ENCODE measurements at regions of chr11 and their contacts with region 1.

Region 1: GRCh38 chr11:2532704-2533586 is 88.1 kb downstream of the KCNQ1 start:
- DNase-seq: peak; percentile 65 to 85
- H3K4me3 ChIP-seq: no peak overlapping the region; the same call in 1 of the 2 replicates
- H3K27ac ChIP-seq: peak overlapping the region; percentile 67; the same call in 1 of the 2 replicates
- H3K4me1 ChIP-seq: peaks cover 13% of the 10 kb centered on the region
- H3K27me3 ChIP-seq: peaks cover 14% of the 10 kb centered on the region
- CTCF ChIP-seq: peak; percentile 92

Region 2: GRCh38 chr11:2305140-2305840 is 227.7 kb before region 1 on chr11:
- CTCF ChIA-PET with region 1: interaction called, 3 read pairs
- POLR2A ChIA-PET with region 1: no interaction called
- intact Hi-C with region 1: loop called (anchors 1 kb)
- DNase-seq: peak in 1 of 2 experiments; percentile 64
- H3K4me3 ChIP-seq: no peak overlapping the region
- H3K27ac ChIP-seq: no peak overlapping the region
- H3K4me1 ChIP-seq: no peaks in the 10 kb centered on the region
- H3K27me3 ChIP-seq: no peaks in the 10 kb centered on the region
- CTCF ChIP-seq: peak; percentile 83

Region 3: DNA sequence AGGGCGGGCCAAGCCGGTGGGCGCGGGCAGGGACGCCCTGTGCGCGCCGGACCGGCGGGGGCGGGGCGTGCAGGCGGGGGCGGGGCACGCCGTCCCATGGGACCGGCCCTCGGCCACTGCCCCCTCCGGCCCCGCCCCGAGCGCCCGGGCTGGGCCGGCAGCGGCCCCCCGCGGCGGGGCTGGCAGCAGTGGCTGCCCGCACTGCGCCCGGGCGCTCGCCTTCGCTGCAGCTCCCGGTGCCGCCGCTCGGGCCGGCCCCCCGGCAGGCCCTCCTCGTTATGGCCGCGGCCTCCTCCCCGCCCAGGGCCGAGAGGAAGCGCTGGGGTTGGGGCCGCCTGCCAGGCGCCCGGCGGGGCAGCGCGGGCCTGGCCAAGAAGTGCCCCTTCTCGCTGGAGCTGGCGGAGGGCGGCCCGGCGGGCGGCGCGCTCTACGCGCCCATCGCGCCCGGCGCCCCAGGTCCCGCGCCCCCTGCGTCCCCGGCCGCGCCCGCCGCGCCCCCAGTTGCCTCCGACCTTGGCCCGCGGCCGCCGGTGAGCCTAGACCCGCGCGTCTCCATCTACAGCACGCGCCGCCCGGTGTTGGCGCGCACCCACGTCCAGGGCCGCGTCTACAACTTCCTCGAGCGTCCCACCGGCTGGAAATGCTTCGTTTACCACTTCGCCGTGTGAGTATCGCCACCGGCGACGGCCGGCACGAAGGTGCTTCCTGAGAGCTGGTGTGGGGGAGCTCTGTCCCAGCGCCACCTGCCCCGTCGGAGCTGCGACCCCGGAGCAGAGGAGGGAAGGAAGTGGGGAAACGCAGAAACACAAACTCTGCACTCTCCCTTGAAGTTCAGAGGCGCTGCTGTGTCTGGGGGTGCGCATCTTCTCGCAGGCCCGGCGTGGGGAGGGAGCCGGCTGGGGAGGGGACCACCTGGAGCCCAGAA is 87.9 kb before region 1 on chr11 and contains the start of gene KCNQ1:
- CTCF ChIA-PET with region 1: no interaction called
- POLR2A ChIA-PET with region 1: interaction called, 10 read pairs
- intact Hi-C with region 1: no loop called
- DNase-seq: peak in 1 of 2 experiments; percentile 32
- H3K4me3 ChIP-seq: no peak within 1 kb of the TSS
- H3K27ac ChIP-seq: no peak within 1 kb of the TSS
- H3K4me1 ChIP-seq: no peaks in the 10 kb centered on the region
- H3K27me3 ChIP-seq: peaks cover 37% of the 10 kb centered on the region
- CTCF ChIP-seq: no peak
- total RNA-seq, gene KCNQ1: 0.55 TPM in 1 of 2 replicates, not detected in the other

Region 4: GRCh38 chr11:2778630-2779498 is 245.9 kb after region 1 on chr11:
- CTCF ChIA-PET with region 1: no interaction called
- POLR2A ChIA-PET with region 1: no interaction called
- intact Hi-C with region 1: loop called (anchors 1 kb)
- DNase-seq: peak in 1 of 2 experiments; percentile 84
- H3K4me3 ChIP-seq: no peak overlapping the region
- H3K27ac ChIP-seq: no peak overlapping the region
- H3K4me1 ChIP-seq: peaks cover 16% of the 10 kb centered on the region
- H3K27me3 ChIP-seq: no peaks in the 10 kb centered on the region
- CTCF ChIP-seq: no peak

Region 5: GRCh38 chr11:2892215-2893020 is 359.5 kb after region 1 on chr11:
- CTCF ChIA-PET with region 1: interaction called, 9 read pairs
- POLR2A ChIA-PET with region 1: interaction called, 5 read pairs
- intact Hi-C with region 1: loop called (anchors 1 kb)
- DNase-seq: peak; percentile 50 to 57
- H3K4me3 ChIP-seq: peak overlapping the region; percentile 62; the same call in 1 of the 2 replicates
- H3K27ac ChIP-seq: peak overlapping the region; percentile 63
- H3K4me1 ChIP-seq: peaks cover 8% of the 10 kb centered on the region; the same call in 1 of the 2 replicates
- H3K27me3 ChIP-seq: no peaks in the 10 kb centered on the region
- CTCF ChIP-seq: peak; percentile 91

Region 6: GRCh38 chr11:3021125-3021524 is 488.2 kb after region 1 on chr11:
- CTCF ChIA-PET with region 1: interaction called, 3 read pairs
- POLR2A ChIA-PET with region 1: no interaction called
- intact Hi-C with region 1: loop called (anchors 5 kb)
- DNase-seq: peak; percentile 33 to 43
- H3K4me3 ChIP-seq: no peak overlapping the region
- H3K27ac ChIP-seq: no peak overlapping the region
- H3K4me1 ChIP-seq: no peaks in the 10 kb centered on the region; the same call in 1 of the 2 replicates
- H3K27me3 ChIP-seq: no peaks in the 10 kb centered on the region
- CTCF ChIP-seq: peak; percentile 52

Measured in PC-9 (cell line).